Sciatic nerve (tissue), 2 donors: ENCODE measurements at regions of chr12 and their contacts with region 1.

Region 1: GRCh38 chr12:104672506-104673265 is 215.9 kb downstream of the CHST11 start:
- DNase-seq: no peak
- ATAC-seq: peak; percentile 6

Region 2: GRCh38 chr12:104303538-104304151 is 369.0 kb before region 1 on chr12 and contains the start of gene EID3:
- intact Hi-C with region 1: no loop called
- DNase-seq: peak; percentile 95
- ATAC-seq: peak; percentile 99
- total RNA-seq, gene EID3: 8.5 TPM

Region 3: GRCh38 chr12:104627990-104628830 is 44.5 kb before region 1 on chr12:
- intact Hi-C with region 1: loop called (anchors 1 kb)
- DNase-seq: no peak
- ATAC-seq: no peak